CD14-positive monocyte (primary cell): ENCODE measurements at regions of chr3 and their contacts with region 1.

Region 1: DNA sequence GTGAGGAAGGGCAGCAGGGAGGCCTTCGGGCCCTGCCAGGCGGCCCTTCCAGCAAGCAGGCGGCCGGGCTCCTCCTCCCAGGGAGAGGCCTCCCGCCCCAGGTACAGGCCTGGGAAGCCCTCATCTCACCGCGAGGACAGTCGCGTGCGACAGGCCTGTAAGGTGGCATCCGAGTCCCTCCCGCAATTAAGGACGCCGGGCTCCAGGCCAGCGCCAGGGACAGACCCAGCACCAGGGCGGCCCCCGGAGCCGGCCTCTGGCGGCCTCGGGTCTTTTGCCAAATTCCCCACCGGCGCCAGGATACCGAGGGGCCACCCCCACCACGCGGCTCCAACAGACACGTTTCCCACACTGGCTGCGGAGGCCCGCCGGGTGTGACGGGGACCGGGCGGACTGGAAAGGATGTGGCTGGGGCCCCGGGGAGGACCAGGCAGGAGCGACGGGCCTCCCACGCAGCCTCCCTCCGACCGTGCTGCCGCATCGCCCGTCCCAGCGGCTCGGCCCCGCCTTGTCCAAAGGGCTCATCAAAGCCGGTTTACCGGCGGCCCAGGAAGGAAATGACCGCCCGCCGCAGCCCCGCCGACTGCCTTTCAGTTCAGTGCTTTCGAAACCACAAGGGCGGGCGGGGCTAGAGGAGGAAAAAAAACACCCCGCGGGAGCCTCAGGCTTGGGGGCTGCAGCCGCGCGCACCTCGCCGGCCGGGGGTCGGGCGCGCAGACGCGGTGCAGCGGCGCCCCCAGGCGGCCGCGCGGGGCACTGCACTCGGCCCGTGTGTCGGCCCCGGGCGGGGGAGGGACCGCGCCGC is 11.3 kb downstream of the XXYLT1 start:
- DNase-seq: peak; percentile 84 to 87 (median 85)
- H3K4me3 ChIP-seq: peak overlapping the region; percentile 49 to 95 (median 75)
- H3K4me3 Mint-ChIP-seq: peak overlapping the region; percentile 73 to 74
- H3K27ac ChIP-seq: peak overlapping the region; percentile 54 to 92
- H3K27ac Mint-ChIP-seq: peak overlapping the region in 6 of 7 donors; percentile 14 to 82 (median 57)
- H3K4me1 ChIP-seq: peaks cover 38 to 53% of the 10 kb centered on the region in 2 donors
- H3K4me1 Mint-ChIP-seq: peaks cover 42% of the 10 kb centered on the region
- H3K27me3 ChIP-seq: no peaks in the 10 kb centered on the region
- H3K27me3 Mint-ChIP-seq: peaks cover 0 to 2% (median 0%) of the 10 kb centered on the region in 3 donors
- CTCF ChIP-seq: peak; percentile 93

Region 2: GRCh38 chr3:194166682-194167479 is 1092.8 kb before region 1 on chr3:
- intact Hi-C with region 1: no loop called
- DNase-seq: no peak
- H3K4me3 ChIP-seq: no peak overlapping the region
- H3K4me3 Mint-ChIP-seq: no peak overlapping the region
- H3K27ac ChIP-seq: no peak overlapping the region
- H3K27ac Mint-ChIP-seq: no peak overlapping the region
- H3K4me1 ChIP-seq: peaks cover 8 to 22% of the 10 kb centered on the region in 2 donors
- H3K4me1 Mint-ChIP-seq: peaks cover 36% of the 10 kb centered on the region
- H3K27me3 ChIP-seq: peaks cover 0 to 12% of the 10 kb centered on the region in 2 donors
- H3K27me3 Mint-ChIP-seq: peaks cover 13 to 33% (median 15%) of the 10 kb centered on the region in 3 donors
- CTCF ChIP-seq: no peak

Region 3: GRCh38 chr3:194671900-194672808 is 587.5 kb before region 1 on chr3 and contains the start of gene LSG1:
- intact Hi-C with region 1: loop called (anchors 2 to 5 kb)
- DNase-seq: peak; percentile 92 to 96 (median 94)
- H3K4me3 ChIP-seq: peak within 1 kb of the TSS; percentile 77 to 97 (median 89)
- H3K4me3 Mint-ChIP-seq: peak within 1 kb of the TSS; percentile 89 to 98
- H3K27ac ChIP-seq: peak within 1 kb of the TSS; percentile 57 to 96
- H3K27ac Mint-ChIP-seq: peak within 1 kb of the TSS; percentile 94 to 99 (median 97)
- H3K4me1 ChIP-seq: peaks cover 14 to 21% of the 10 kb centered on the region in 2 donors
- H3K4me1 Mint-ChIP-seq: peaks cover 14% of the 10 kb centered on the region
- H3K27me3 ChIP-seq: no peaks in the 10 kb centered on the region
- H3K27me3 Mint-ChIP-seq: peaks cover 4 to 6% (median 5%) of the 10 kb centered on the region in 3 donors
- CTCF ChIP-seq: no peak
- polyA plus RNA-seq, gene LSG1: 6.7 to 30.9 (median 9.9) TPM

Region 4: DNA sequence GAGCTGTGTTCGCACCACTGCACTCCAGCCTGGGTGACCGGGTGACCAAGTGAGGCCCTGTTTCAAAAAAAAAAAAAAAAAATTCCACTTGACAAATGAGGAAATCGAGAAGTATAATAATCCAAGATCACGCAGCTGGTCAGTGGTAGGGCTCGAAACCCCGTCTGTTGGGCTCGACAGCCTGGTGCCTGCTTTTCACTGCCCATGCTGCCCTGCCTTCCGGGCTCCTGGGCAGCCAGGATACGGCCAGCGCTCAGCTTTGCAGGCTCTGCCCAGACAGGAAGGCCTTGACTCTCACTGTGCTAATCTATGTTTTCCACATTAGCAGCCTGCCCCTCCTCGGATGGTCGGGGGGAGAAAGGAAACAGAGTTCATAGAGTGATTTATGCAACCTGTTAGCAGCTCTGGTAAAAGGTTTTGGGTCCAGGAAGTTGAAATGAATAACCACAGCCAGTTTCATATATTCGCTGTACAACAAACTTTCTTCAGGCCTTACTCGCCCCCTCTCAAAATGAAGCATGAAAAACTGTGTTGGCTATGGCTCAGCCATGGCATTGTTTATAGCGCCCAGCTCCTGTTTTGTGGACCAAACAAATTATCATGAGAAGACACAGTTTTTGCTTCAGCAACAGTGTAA is 97.5 kb before region 1 on chr3:
- intact Hi-C with region 1: no loop called
- DNase-seq: peak in 1 of 3 donors; percentile 34
- H3K4me3 ChIP-seq: no peak overlapping the region
- H3K4me3 Mint-ChIP-seq: peak overlapping the region in 1 of 2 donors; percentile 21
- H3K27ac ChIP-seq: peak overlapping the region; percentile 38 to 61
- H3K27ac Mint-ChIP-seq: peak overlapping the region in 6 of 7 donors; percentile 30 to 85 (median 66)
- H3K4me1 ChIP-seq: peaks cover 71% of the 10 kb centered on the region in 2 donors
- H3K4me1 Mint-ChIP-seq: peaks cover 74% of the 10 kb centered on the region
- H3K27me3 ChIP-seq: no peaks in the 10 kb centered on the region
- H3K27me3 Mint-ChIP-seq: peaks cover 0 to 7% (median 0%) of the 10 kb centered on the region in 3 donors
- CTCF ChIP-seq: no peak

Region 5: GRCh38 chr3:195442573-195443390 is 183.1 kb after region 1 on chr3 and contains the start of gene ACAP2:
- intact Hi-C with region 1: loop called in 1 of 2 experiments (anchors 5 kb)
- DNase-seq: peak; percentile 99 to 100 (median 99)
- H3K4me3 ChIP-seq: peak within 1 kb of the TSS; percentile 85 to 95 (median 87)
- H3K4me3 Mint-ChIP-seq: peak within 1 kb of the TSS; percentile 90 to 96
- H3K27ac ChIP-seq: peak within 1 kb of the TSS; percentile 95
- H3K27ac Mint-ChIP-seq: peak within 1 kb of the TSS; percentile 92 to 98 (median 97)
- H3K4me1 ChIP-seq: peaks cover 50 to 67% of the 10 kb centered on the region in 2 donors
- H3K4me1 Mint-ChIP-seq: peaks cover 62% of the 10 kb centered on the region
- H3K27me3 ChIP-seq: no peaks in the 10 kb centered on the region
- H3K27me3 Mint-ChIP-seq: no peaks in the 10 kb centered on the region
- CTCF ChIP-seq: no peak
- polyA plus RNA-seq, gene ACAP2: 41.5 to 96.5 (median 71.6) TPM

Region 6: GRCh38 chr3:195517030-195517429 is 257.4 kb after region 1 on chr3:
- intact Hi-C with region 1: loop called in 1 of 2 experiments (anchors 5 kb)
- DNase-seq: no peak
- H3K4me3 ChIP-seq: no peak overlapping the region
- H3K4me3 Mint-ChIP-seq: no peak overlapping the region
- H3K27ac ChIP-seq: no peak overlapping the region
- H3K27ac Mint-ChIP-seq: no peak overlapping the region
- H3K4me1 ChIP-seq: peaks cover 2 to 3% of the 10 kb centered on the region in 2 donors
- H3K4me1 Mint-ChIP-seq: peaks cover 3% of the 10 kb centered on the region
- H3K27me3 ChIP-seq: no peaks in the 10 kb centered on the region
- H3K27me3 Mint-ChIP-seq: no peaks in the 10 kb centered on the region
- CTCF ChIP-seq: no peak